ENCODE measurements at regions of chr15 and their contacts with region 1.

Region 1: DNA sequence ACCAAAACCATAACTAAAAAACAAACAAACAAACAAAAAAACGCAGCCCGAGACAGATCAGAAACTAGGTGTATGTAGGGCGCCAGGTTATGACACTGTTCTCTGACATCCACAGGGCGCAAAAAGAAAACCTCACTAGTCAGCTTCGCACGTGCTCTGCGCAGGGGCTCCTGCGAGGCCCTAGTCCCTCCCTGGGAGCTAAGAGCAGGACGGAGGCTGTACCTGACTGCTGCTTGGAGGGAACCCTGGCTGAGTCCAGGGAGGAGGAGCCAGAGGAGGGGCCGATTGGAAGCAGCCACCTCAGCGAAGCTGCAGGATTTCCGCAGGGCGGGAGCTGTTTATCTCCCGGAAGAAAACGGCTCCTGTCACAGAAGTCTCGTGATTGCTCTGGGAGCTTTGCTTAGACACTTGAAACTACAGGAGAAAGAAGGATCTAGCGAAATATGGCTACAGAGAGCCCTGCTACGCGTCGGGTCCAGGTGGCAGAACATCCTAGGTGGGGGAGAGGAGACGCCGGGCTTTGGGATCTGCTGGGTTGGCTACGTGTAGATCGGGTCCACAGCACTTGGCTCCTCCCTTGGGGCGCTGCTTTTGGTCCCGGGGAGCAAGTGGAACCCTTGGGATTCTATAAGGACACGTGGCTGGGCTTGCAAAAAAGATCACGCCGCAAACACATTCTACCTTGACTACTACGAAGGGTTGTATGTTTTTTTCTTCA is at the start of gene GALK2:
- DNase-seq: peak; percentile 84
- ATAC-seq: peak; percentile 100
- H3K4me3 ChIP-seq: peak within 1 kb of the TSS; percentile 72 to 77 (median 74)
- H3K27ac ChIP-seq: peak within 1 kb of the TSS; percentile 79
- H3K4me1 ChIP-seq: peaks cover 21% of the 10 kb centered on the region
- H3K27me3 ChIP-seq: no peaks in the 10 kb centered on the region
- CTCF ChIP-seq: no peak
- EP300 ChIP-seq: no peak
- POLR2A ChIP-seq: peak; percentile 71 to 89
- RAD21 ChIP-seq: no peak
- total RNA-seq, gene GALK2: 32.8 and 45.5 TPM in 2 replicates

Region 2: DNA sequence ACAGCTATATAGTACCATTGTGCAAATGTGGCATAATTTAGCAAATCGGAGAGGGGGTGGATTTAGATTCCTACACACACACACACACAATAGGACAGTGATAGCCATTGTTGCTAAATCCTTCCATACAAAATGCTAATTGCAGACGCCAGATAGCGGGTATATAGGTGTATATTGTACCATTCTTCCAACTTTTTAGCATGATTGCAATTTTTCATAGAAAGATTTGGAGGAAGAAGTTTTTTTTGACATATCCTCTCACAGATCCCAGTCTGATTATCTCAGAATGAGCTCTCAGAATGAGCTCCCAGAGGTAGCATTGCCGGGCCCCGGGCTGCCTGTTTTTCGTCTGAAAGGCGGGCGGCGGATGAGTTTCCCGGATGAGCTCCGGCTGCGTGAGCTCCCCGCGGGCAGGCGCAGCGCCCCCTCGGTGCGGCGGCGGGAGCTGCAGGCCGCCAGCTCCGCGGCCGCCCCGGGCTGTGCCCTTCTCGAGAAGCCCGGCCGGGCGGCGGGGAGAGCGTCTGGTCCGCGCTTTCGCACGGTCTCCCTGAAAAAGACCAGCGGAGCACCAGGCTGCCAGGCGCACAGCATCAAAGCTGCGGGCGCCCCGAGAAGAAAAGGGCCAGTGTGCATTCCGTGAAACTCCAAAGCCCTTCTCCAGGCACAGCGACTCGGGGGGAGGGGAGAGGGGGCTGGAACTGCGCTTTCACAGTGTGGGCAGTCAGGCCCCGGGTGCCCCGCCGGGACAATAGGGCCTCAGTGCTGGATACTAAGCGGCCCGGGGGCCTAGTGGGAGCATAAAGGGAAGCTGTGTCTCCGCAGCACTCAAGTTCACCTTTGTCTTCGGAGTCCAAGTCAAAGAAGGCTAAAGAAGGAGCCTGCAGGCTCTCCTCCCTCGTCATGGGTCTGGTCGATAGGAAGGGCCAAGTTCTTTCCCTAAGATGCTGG is 194.3 kb before region 1 on chr15:
- CTCF ChIA-PET with region 1: no interaction called
- POLR2A ChIA-PET with region 1: interaction called, 10 read pairs
- in situ Hi-C with region 1: no loop called
- intact Hi-C with region 1: no loop called
- DNase-seq: peak; percentile 65
- ATAC-seq: peak; percentile 94
- H3K4me3 ChIP-seq: peak overlapping the region; percentile 69 to 80 (median 71)
- H3K27ac ChIP-seq: peak overlapping the region; percentile 51
- H3K4me1 ChIP-seq: peaks cover 18% of the 10 kb centered on the region
- H3K27me3 ChIP-seq: peaks cover 3 to 6% of the 10 kb centered on the region in 2 experiments; a peak in 3 of 5 replicates
- CTCF ChIP-seq: peak; percentile 76
- EP300 ChIP-seq: no peak; a peak in 1 of 4 replicates
- POLR2A ChIP-seq: peak in 1 of 2 experiments; percentile 14; a peak in 2 of 4 replicates
- RAD21 ChIP-seq: peak; percentile 57

Region 3: GRCh38 chr15:49155110-49155833 is 14.8 kb before region 1 on chr15 and contains the start of gene COPS2:
- CTCF ChIA-PET with region 1: no interaction called
- POLR2A ChIA-PET with region 1: interaction called, 40 read pairs
- in situ Hi-C with region 1: no loop called
- intact Hi-C with region 1: loop called (anchors 2 kb)
- DNase-seq: peak; percentile 96
- ATAC-seq: peak; percentile 96
- H3K4me3 ChIP-seq: peak within 1 kb of the TSS; percentile 68 to 86 (median 82)
- H3K27ac ChIP-seq: peak within 1 kb of the TSS; percentile 76
- H3K4me1 ChIP-seq: peaks cover 31% of the 10 kb centered on the region
- H3K27me3 ChIP-seq: no peaks in the 10 kb centered on the region; a peak in 1 of 5 replicates
- CTCF ChIP-seq: peak; percentile 15
- EP300 ChIP-seq: 0 out of 4 replicates have a peak, but pooled peaks of 1 of the 2 experiments have one; percentile 35
- POLR2A ChIP-seq: peak; percentile 61 to 84; a peak in 3 of 4 replicates
- RAD21 ChIP-seq: no peak; the same call in 1 of the 2 replicates
- total RNA-seq, gene COPS2: 66.3 and 138 TPM in 2 replicates